ENCODE measurements at regions of chr13 and their contacts with region 1.

Region 1: DNA sequence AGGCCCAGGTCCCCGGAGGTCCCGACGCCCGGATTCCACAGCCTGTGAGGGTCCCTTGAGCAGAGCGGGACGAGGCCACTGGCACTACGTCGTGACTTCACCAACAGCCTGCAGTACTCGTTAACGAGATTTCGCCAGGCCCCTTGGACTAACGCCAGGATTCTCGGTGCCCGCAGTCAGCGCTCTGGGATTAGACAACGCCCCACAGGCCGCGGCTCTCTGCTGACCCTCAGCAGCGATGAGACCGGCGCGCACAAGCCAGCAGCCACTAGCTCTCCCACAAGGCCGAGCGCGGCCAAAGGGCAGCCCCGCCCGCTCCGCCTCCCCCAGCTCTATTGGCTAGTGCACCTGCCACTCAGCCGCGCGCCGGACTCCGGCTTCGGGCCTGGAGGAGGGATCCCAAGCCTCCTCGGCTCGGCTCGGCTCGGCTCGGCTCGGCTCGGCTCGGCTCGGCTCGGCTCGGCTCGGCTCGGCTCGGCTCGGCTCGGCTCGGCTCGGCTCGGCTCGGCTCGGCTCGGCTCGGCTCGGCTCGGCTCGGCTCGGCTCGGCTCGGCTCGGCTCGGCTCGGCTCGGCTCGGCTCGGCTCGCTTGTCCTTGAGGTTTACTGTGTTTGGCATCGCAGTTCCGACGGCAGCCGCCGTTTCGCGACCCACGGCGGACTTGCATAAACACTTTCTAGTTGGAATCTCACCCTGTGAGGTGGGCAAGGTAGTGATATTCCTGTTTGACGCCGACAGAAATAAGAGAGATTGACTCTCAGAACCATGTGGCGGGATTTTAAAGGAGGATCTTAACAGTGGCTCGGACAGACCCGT is 231.7 kb upstream of the SERP2 start:
- DNase-seq: peak; percentile 84 to 98 (median 91)
- ATAC-seq: peak; percentile 96
- H3K4me3 ChIP-seq: peak overlapping the region; percentile 78 to 81
- H3K4me3 Mint-ChIP-seq: peak overlapping the region; percentile 91
- H3K27ac ChIP-seq: peak overlapping the region; percentile 68 to 89
- H3K27ac Mint-ChIP-seq: peak overlapping the region; percentile 94
- H3K4me1 ChIP-seq: peaks cover 13% of the 10 kb centered on the region
- H3K4me1 Mint-ChIP-seq: peaks cover 15% of the 10 kb centered on the region
- H3K27me3 ChIP-seq: no peaks in the 10 kb centered on the region
- H3K27me3 Mint-ChIP-seq: peaks cover 2% of the 10 kb centered on the region
- CTCF ChIP-seq: no peak

Region 2: DNA sequence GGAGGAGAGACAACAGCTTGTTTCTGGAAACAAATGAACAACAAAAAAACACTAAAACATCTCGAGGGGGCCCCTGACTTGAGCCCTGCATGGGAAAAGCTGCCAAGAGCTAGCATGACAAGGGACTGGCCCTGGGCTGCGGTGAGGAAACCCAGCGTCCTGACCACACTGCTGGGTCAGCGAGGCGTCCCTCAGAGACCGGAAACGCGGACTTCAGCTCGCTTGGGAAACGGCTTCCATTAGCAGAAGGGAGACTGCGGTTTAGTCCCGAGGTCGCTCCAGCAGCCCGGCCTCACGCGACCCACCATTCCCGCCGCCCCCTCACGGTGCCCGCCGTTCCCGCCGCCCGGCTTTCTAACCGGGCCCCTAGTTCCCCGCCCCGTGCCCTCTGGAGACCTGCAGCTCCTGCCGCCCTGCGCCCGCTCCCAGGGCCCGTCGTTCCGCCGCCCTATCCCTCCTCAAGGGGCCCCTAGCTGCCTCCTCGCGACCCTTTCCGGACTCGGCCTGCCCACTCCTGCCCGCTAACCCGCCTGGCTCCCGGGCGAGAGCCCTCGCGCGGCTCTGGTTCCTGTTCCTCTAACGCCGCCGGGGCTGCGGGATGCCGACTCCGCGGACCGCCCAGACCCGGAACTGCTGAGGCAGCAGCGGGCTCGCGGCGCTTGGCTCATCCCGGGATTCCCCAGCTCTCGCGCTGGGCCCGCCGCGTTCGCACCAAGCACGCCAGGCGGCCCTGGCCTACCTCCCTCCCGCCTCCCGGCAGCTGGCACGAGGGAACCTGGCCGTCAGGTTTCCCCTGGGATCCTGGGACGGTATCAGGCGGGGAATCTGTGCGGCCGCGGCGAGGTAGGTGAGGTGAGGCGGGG is 262.8 kb before region 1 on chr13 and contains the start of gene CCDC122:
- CTCF ChIA-PET with region 1: no interaction called
- POLR2A ChIA-PET with region 1: no interaction called
- intact Hi-C with region 1: loop called (anchors 5 to 10 kb)
- DNase-seq: peak; percentile 37 to 89 (median 69)
- ATAC-seq: peak; percentile 78
- H3K4me3 ChIP-seq: peak within 1 kb of the TSS; percentile 56 to 66
- H3K4me3 Mint-ChIP-seq: peak within 1 kb of the TSS; percentile 90
- H3K27ac ChIP-seq: peak within 1 kb of the TSS in 1 of 2 experiments; percentile 61
- H3K27ac Mint-ChIP-seq: peak within 1 kb of the TSS; percentile 84
- H3K4me1 ChIP-seq: peaks cover 10% of the 10 kb centered on the region
- H3K4me1 Mint-ChIP-seq: peaks cover 14% of the 10 kb centered on the region
- H3K27me3 ChIP-seq: no peaks in the 10 kb centered on the region
- H3K27me3 Mint-ChIP-seq: peaks cover 11% of the 10 kb centered on the region
- CTCF ChIP-seq: no peak
- total RNA-seq, gene CCDC122: not detected

Region 3: GRCh38 chr13:44267966-44268365 is 126.0 kb after region 1 on chr13:
- CTCF ChIA-PET with region 1: no interaction called
- POLR2A ChIA-PET with region 1: no interaction called
- intact Hi-C with region 1: loop called in 1 of 2 experiments (anchors 2 kb)
- DNase-seq: no peak
- ATAC-seq: no peak
- H3K4me3 ChIP-seq: no peak overlapping the region
- H3K4me3 Mint-ChIP-seq: no peak overlapping the region
- H3K27ac ChIP-seq: no peak overlapping the region
- H3K27ac Mint-ChIP-seq: no peak overlapping the region
- H3K4me1 ChIP-seq: no peaks in the 10 kb centered on the region
- H3K4me1 Mint-ChIP-seq: no peaks in the 10 kb centered on the region
- H3K27me3 ChIP-seq: no peaks in the 10 kb centered on the region
- H3K27me3 Mint-ChIP-seq: no peaks in the 10 kb centered on the region
- CTCF ChIP-seq: no peak

Region 4: GRCh38 chr13:44988973-44989817 is 847.3 kb after region 1 on chr13 and contains the starts of genes GPALPP1 and NUFIP1:
- CTCF ChIA-PET with region 1: no interaction called
- POLR2A ChIA-PET with region 1: no interaction called
- intact Hi-C with region 1: loop called in 1 of 2 experiments (anchors 5 kb)
- DNase-seq: peak; percentile 79 to 96 (median 93)
- ATAC-seq: peak; percentile 94
- H3K4me3 ChIP-seq: peak within 1 kb of the TSS; percentile 88 to 92
- H3K4me3 Mint-ChIP-seq: peak within 1 kb of the TSS; percentile 100
- H3K27ac ChIP-seq: peak within 1 kb of the TSS; percentile 86 to 90
- H3K27ac Mint-ChIP-seq: peak within 1 kb of the TSS; percentile 99
- H3K4me1 ChIP-seq: peaks cover 20% of the 10 kb centered on the region
- H3K4me1 Mint-ChIP-seq: peaks cover 64% of the 10 kb centered on the region
- H3K27me3 ChIP-seq: no peaks in the 10 kb centered on the region
- H3K27me3 Mint-ChIP-seq: no peaks in the 10 kb centered on the region
- CTCF ChIP-seq: no peak
- total RNA-seq, gene GPALPP1: 16.7 to 17.8 TPM
- total RNA-seq, gene NUFIP1: 5.2 to 6.1 TPM